ENCODE measurements at regions of chr17 and their contacts with region 1.

Region 1: GRCh38 chr17:17859909-17860765 is 23.4 kb upstream of the SREBF1 start:
- DNase-seq: peak; percentile 56 to 69 (median 66)
- H3K4me3 ChIP-seq: no peak overlapping the region
- H3K4me3 Mint-ChIP-seq: no peak overlapping the region
- H3K27ac ChIP-seq: no peak overlapping the region
- H3K27ac Mint-ChIP-seq: no peak overlapping the region
- H3K4me1 ChIP-seq: no peaks in the 10 kb centered on the region
- H3K4me1 Mint-ChIP-seq: peaks cover 2% of the 10 kb centered on the region
- H3K27me3 ChIP-seq: no peaks in the 10 kb centered on the region
- H3K27me3 Mint-ChIP-seq: peaks cover 0 to 2% (median 0%) of the 10 kb centered on the region in 3 donors
- CTCF ChIP-seq: peak; percentile 97

Region 2: DNA sequence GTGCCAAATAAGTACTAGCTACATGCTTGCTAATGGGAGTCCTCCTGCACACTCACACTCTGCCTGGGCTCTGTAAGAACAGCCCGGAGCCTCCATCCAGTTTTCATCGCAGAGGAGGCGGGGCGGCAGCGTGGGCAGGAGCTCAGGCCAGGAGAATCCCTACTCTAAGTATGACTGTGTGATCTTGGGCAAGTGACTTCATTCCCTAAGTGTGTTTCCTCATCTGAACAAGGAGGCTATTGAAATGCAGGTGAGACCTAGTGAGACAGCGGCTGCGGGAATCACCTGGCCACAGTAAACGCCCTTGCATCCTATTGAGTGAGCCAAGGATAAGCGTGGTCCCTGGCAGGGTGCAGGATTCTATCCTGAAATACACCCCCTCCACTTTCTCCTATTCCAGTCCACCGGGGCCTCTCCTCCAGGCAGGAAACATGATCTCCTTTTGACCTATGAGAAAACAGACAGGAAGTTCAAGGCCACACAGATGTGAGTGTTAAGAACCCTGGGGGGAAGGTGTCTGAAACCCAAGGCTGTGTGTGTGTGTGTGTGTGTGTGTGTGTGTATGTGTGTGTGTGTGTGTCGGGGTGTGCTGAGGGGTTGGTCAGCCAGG is 184.1 kb before region 1 on chr17:
- intact Hi-C with region 1: loop called (anchors 2 to 5 kb)
- DNase-seq: no peak
- H3K4me3 ChIP-seq: no peak overlapping the region
- H3K4me3 Mint-ChIP-seq: no peak overlapping the region
- H3K27ac ChIP-seq: no peak overlapping the region
- H3K27ac Mint-ChIP-seq: no peak overlapping the region
- H3K4me1 ChIP-seq: peaks cover 23 to 28% of the 10 kb centered on the region in 2 donors
- H3K4me1 Mint-ChIP-seq: peaks cover 35% of the 10 kb centered on the region
- H3K27me3 ChIP-seq: no peaks in the 10 kb centered on the region
- H3K27me3 Mint-ChIP-seq: peaks cover 3 to 23% (median 12%) of the 10 kb centered on the region in 3 donors
- CTCF ChIP-seq: no peak

Region 3: DNA sequence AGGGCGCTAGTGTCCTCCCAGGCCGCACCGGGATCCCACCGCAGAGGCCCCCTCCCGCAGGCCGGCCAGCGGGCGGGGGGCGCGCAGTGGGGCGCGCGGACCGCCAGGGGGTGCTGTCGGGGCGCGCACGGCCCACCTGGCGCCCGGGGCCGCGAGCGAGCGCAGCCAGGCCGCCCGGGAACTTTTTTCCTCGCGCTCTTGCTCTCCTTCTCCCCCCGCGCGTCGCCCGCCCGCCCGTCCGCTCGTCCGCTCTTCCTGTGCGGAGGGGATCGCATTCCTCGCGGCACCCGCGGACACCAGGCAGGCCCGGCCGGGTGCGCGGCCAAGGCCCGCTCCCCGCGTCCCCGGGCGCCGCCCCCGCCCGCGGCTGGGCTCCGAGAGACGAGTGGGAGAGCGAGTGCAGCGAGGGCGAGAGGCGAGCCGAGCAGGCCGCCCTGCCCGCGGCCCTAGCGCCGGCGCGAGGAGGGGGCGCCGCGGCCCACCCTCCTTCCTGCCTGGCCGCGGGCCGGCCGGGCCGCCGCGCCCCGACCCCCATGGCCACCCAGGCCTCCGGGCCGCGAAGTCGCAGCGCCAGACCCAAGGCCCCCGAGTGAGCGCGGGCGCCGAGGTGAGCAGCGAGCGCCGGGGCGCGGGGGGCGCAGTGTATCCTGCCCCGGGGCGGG is 178.8 kb before region 1 on chr17 and contains the start of gene RAI1:
- intact Hi-C with region 1: loop called (anchors 2 to 5 kb)
- DNase-seq: peak; percentile 64 to 72 (median 69)
- H3K4me3 ChIP-seq: peak within 1 kb of the TSS; percentile 50 to 87 (median 66)
- H3K4me3 Mint-ChIP-seq: peak within 1 kb of the TSS; percentile 90 to 92
- H3K27ac ChIP-seq: peak within 1 kb of the TSS; percentile 75 to 89
- H3K27ac Mint-ChIP-seq: peak within 1 kb of the TSS; percentile 73 to 95 (median 89)
- H3K4me1 ChIP-seq: peaks cover 15 to 35% of the 10 kb centered on the region in 2 donors
- H3K4me1 Mint-ChIP-seq: peaks cover 33% of the 10 kb centered on the region
- H3K27me3 ChIP-seq: no peaks in the 10 kb centered on the region
- H3K27me3 Mint-ChIP-seq: peaks cover 3 to 10% (median 4%) of the 10 kb centered on the region in 3 donors
- CTCF ChIP-seq: peak; percentile 78
- polyA plus RNA-seq, gene RAI1: 0.89 to 4.4 (median 1.5) TPM

Region 4: GRCh38 chr17:17812211-17813057 is 47.7 kb before region 1 on chr17:
- intact Hi-C with region 1: loop called (anchors 1 kb)
- DNase-seq: peak; percentile 54 to 64 (median 56)
- H3K4me3 ChIP-seq: no peak overlapping the region
- H3K4me3 Mint-ChIP-seq: no peak overlapping the region
- H3K27ac ChIP-seq: no peak overlapping the region
- H3K27ac Mint-ChIP-seq: peak overlapping the region in 2 of 7 donors; percentile 15 to 50
- H3K4me1 ChIP-seq: no peaks in the 10 kb centered on the region
- H3K4me1 Mint-ChIP-seq: no peaks in the 10 kb centered on the region
- H3K27me3 ChIP-seq: no peaks in the 10 kb centered on the region
- H3K27me3 Mint-ChIP-seq: peaks cover 0 to 3% (median 3%) of the 10 kb centered on the region in 3 donors
- CTCF ChIP-seq: peak; percentile 100